K562 (cell line): ENCODE measurements at regions of chr11 and their contacts with region 1.

Region 1: GRCh38 chr11:32615422-32615821 is 31.8 kb downstream of the EIF3M start:
- DNase-seq: peak in 1 of 4 experiments; percentile 13
- ATAC-seq: no peak
- H3K4me3 ChIP-seq: no peak overlapping the region
- H3K27ac ChIP-seq: no peak overlapping the region
- H3K4me1 ChIP-seq: no peaks in the 10 kb centered on the region
- H3K27me3 ChIP-seq: no peaks in the 10 kb centered on the region
- CTCF ChIP-seq: peak in 2 of 3 experiments; percentile 3 to 54; a peak in 3 of 6 replicates
- EP300 ChIP-seq: no peak
- POLR2A ChIP-seq: no peak
- RAD21 ChIP-seq: peak; percentile 52 to 66

Region 2: GRCh38 chr11:32323814-32324130 is 291.6 kb before region 1 on chr11:
- CTCF ChIA-PET with region 1: interaction called, 13 read pairs
- POLR2A ChIA-PET with region 1: no interaction called
- in situ Hi-C with region 1: no loop called
- intact Hi-C with region 1: loop called (anchors 1 kb)
- DNase-seq: no peak
- ATAC-seq: no peak
- H3K4me3 ChIP-seq: no peak overlapping the region
- H3K27ac ChIP-seq: no peak overlapping the region
- H3K4me1 ChIP-seq: no peaks in the 10 kb centered on the region
- H3K27me3 ChIP-seq: peaks cover 7 to 11% of the 10 kb centered on the region in 2 experiments; a peak in 3 of 5 replicates
- CTCF ChIP-seq: no peak
- EP300 ChIP-seq: no peak
- POLR2A ChIP-seq: no peak
- RAD21 ChIP-seq: no peak

Region 3: GRCh38 chr11:32374261-32374711 is 241.1 kb before region 1 on chr11:
- CTCF ChIA-PET with region 1: no interaction called
- POLR2A ChIA-PET with region 1: no interaction called
- in situ Hi-C with region 1: no loop called
- intact Hi-C with region 1: loop called (anchors 1 kb)
- DNase-seq: peak; percentile 75 to 89 (median 76)
- ATAC-seq: peak; percentile 97
- H3K4me3 ChIP-seq: no peak overlapping the region
- H3K27ac ChIP-seq: no peak overlapping the region
- H3K4me1 ChIP-seq: peaks cover 0 to 4% of the 10 kb centered on the region in 2 experiments; a peak in 2 of 5 replicates
- H3K27me3 ChIP-seq: no peaks in the 10 kb centered on the region
- CTCF ChIP-seq: peak; percentile 87 to 92 (median 89)
- EP300 ChIP-seq: peak; percentile 27; the same call in 1 of the 2 replicates
- POLR2A ChIP-seq: no peak
- RAD21 ChIP-seq: peak; percentile 73 to 91